ENCODE measurements at regions of chr9 and their contacts with region 1.

Region 1: DNA sequence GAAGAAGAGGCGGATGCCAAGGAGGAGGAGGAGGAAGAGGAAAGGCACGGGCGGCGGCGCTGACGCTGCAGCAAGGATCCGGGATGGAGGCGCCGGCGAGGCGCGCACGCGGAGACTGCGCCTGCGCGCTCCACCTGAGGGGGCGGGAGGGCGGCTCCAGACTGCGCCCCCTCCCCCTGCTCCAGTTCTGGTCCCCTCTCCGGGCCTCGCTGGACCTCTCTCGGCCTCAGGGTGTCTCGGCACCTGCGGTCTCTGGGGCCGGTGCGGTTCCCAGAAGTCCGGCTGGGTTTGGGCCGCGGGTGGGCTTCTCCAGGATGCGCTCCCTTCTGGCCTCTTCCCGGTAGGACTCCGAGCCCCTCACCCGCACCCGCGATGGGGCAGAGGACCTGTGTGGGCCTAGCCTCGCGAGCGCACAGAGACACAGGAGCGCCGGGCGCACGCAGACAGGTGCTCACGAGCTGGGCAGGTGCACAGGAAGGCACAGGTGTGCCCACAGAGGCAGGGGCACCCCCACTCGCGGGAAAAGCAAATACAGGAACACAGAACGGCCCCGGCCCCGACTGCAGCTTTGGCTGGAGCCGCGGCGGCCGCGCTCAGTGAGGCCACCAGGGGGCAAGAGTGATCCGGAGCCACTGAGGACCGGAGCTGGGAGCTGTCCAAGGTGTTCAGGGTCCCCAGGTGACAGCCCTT is at the start of gene NPDC1:
- DNase-seq: peak; percentile 90
- H3K4me3 Mint-ChIP-seq: peak within 1 kb of the TSS; percentile 50
- H3K27ac Mint-ChIP-seq: no peak within 1 kb of the TSS
- H3K4me1 Mint-ChIP-seq: peaks cover 14% of the 10 kb centered on the region
- H3K27me3 Mint-ChIP-seq: peaks cover 47% of the 10 kb centered on the region
- total RNA-seq, gene NPDC1: 14.2 to 15.9 TPM

Region 2: GRCh38 chr9:137034863-137035761 is 11.1 kb before region 1 on chr9:
- CTCF ChIA-PET with region 1: interaction called, 13 read pairs
- intact Hi-C with region 1: no loop called
- DNase-seq: peak; percentile 93
- H3K4me3 Mint-ChIP-seq: peak overlapping the region; percentile 59
- H3K27ac Mint-ChIP-seq: peak overlapping the region; percentile 79
- H3K4me1 Mint-ChIP-seq: peaks cover 29% of the 10 kb centered on the region
- H3K27me3 Mint-ChIP-seq: peaks cover 2% of the 10 kb centered on the region

Region 3: DNA sequence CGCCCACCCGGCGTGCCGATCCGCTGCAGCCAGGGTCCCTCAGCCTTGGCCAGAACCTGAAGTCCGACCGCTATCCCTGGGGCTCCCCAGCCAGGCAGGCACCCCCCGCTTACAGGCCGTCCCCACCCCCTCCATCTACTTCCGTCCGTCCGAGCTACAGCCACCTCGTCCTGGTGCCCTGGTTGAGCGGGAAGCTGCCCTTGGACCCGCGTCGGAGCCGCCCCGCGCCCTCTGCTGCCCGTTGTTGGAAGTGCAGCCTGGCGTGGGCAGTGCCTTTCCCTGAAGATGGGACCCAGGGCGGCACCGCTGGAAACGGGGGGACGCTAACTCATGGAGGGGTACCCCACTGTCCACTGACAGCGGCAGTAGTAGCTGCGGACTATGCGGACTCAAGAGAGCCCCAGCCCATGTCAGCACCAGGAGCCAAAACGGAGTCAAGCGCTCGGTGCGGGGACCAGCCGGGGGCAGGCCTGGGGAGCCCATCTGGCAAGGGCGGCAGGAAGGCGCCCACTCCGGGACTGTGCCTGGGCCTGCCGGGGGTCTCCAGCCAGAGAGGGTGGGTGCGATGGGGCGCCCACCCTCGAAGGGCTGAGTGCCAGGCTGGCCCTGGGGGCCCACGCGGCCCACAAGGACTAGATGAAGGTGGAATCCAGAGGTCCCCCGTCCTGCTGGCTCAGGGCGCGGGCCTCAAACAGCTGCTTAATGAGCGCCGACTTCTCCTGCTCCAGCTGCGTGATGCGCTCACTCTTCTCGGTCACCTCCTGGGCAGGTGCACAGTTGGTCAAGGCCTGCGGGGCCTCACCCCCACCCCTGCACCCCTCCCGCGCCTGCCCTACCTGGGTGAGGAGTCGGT is 18.0 kb after region 1 on chr9:
- CTCF ChIA-PET with region 1: interaction called, 37 read pairs
- intact Hi-C with region 1: loop called (anchors 1 kb)
- DNase-seq: peak; percentile 61
- H3K4me3 Mint-ChIP-seq: no peak overlapping the region
- H3K27ac Mint-ChIP-seq: no peak overlapping the region
- H3K4me1 Mint-ChIP-seq: peaks cover 7% of the 10 kb centered on the region
- H3K27me3 Mint-ChIP-seq: peaks cover 3% of the 10 kb centered on the region

Region 4: DNA sequence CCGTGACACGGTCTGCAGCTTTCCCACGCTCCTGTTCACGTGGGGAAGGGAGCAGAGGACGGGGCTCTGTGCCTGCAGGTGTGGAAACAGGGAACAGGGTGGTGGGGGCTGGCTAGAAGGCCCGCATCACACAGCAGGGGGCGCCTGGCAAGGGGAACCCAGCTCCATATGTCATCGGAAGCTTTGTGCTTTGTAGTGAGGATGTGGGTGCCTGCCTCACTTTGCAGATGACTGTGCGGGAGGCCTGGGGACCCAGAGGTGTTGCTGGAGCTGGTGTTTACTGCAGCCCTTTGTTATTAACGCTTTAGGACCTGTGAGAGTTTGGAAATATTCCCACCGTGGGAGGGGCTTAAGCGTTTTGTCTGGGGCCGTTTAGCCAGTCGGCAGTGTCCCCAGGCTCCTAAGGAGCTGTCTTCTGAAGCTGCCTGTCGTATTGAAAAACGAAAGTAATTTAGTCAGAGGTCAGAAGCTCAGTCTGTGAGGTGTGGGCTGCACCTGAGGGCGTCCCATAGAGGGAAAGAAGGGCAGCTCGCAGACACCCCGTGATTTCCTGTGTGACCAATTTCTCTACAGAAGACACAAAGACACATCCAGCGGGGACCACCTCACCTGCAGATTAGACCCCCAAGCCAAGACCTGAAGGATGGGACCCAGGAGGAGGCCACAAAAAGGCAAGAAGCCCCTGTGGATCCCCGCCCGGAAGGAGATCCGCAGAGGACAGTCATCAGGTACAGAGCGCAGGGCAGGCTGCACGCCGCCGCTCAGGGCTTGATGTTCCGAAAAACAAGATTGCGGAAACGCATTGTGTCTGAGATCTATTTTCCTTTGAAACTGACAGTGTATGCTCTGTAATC is 49.6 kb after region 1 on chr9:
- CTCF ChIA-PET with region 1: no interaction called
- intact Hi-C with region 1: no loop called
- DNase-seq: peak; percentile 95
- H3K4me3 Mint-ChIP-seq: peak overlapping the region; percentile 66
- H3K27ac Mint-ChIP-seq: peak overlapping the region; percentile 88
- H3K4me1 Mint-ChIP-seq: peaks cover 19% of the 10 kb centered on the region
- H3K27me3 Mint-ChIP-seq: no peaks in the 10 kb centered on the region

Region 5: DNA sequence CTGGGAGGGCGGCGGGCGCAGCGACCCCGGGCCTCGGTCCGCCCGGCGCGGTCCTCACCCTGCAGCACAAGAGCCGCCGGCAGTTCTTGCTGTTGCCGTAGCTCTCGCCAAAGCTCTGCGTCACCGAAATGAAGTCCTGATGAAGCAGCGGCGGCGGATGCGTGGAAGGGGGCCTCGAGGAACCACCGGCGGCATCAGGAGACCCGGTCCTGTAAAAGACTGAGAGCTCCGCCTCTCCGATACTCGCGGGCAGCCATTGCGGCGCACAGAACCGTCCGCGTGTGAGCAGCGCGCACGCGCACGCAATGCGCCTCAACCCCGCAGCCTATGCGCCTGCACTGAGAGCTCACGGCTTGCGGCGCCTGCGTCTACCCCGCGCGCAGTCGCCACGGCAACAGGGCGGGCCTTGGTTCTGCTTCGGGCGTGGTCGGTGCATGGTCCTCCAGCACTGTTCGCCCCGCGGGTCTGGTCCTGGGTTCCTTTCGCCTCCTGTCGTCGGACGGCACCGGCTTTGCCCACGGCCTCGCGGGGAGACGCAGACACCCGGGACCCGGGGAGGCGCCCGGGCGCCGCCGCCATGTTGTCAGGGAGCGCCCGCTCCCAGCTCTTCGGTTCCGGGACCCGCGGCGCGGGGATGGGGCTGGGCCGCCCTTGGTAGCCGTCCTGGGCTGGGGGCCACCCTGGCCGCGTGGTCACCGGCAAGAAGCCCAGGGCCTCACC is 83.4 kb after region 1 on chr9:
- CTCF ChIA-PET with region 1: interaction called, 3 read pairs
- intact Hi-C with region 1: loop called (anchors 5 kb)
- DNase-seq: peak; percentile 92
- H3K4me3 Mint-ChIP-seq: peak overlapping the region; percentile 91
- H3K27ac Mint-ChIP-seq: peak overlapping the region; percentile 74
- H3K4me1 Mint-ChIP-seq: peaks cover 17% of the 10 kb centered on the region
- H3K27me3 Mint-ChIP-seq: peaks cover 5% of the 10 kb centered on the region

Region 6: DNA sequence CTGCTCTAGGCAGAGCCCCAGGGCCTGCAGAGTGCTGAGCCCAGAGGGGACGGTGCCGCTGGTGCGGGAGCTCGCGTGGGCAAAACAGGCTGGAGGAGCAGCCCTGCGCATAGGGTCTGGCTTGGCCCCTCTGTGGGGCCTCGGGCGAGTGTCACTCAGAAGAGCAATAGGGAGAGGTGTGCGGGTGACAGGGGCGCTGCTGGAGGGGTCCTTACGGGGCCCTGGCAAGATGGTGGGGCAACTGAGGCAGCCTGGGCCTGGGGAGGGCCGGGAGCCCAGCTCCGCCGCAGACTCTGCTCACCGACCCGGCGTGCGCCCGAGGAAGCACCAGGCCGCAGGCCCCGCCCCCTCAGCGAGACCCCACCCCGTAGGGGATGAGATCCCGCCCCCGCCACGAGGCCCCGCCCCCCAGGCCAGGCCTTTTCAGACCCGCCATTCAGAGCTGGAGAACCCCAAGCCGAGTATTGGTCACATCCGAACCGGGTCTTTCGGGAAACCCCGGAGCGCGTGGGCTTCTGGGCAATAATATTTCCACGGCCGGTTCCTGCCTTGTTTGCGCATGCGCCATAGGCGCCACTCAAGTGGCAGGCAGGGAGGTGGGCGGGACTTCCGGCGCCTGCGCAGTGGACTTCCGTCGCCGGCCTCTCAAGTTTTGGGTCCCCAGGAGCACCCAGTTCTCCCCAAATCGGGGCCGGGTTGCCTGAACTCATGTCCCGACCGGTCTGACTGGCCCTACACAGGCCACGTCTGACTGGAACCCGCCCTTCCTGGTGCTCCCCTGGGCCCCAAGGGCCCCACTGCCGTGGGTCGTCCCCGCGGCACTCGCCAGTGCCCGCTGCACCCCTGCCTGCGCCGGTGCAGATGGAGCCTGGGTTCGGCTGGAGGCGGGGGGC is 177.1 kb after region 1 on chr9:
- CTCF ChIA-PET with region 1: interaction called, 14 read pairs
- intact Hi-C with region 1: no loop called
- DNase-seq: peak; percentile 99
- H3K4me3 Mint-ChIP-seq: peak overlapping the region; percentile 85
- H3K27ac Mint-ChIP-seq: no peak overlapping the region
- H3K4me1 Mint-ChIP-seq: peaks cover 8% of the 10 kb centered on the region
- H3K27me3 Mint-ChIP-seq: peaks cover 2% of the 10 kb centered on the region

Measured in activated naive CD4-positive, alpha-beta T cell treated with anti-CD3 and anti-CD28 coated beads for 36 hours (primary cell).